ENCODE measurements at regions of chr3 and their contacts with region 1.

Region 1: GRCh38 chr3:4303187-4304123 is at the start of gene SETMAR:
- DNase-seq: peak; percentile 92
- H3K4me3 Mint-ChIP-seq: peak within 1 kb of the TSS; percentile 89
- H3K27ac Mint-ChIP-seq: peak within 1 kb of the TSS; percentile 98
- H3K4me1 Mint-ChIP-seq: peaks cover 27% of the 10 kb centered on the region
- H3K27me3 Mint-ChIP-seq: no peaks in the 10 kb centered on the region
- total RNA-seq, gene SETMAR: 11.6 to 12.6 TPM

Region 2: DNA sequence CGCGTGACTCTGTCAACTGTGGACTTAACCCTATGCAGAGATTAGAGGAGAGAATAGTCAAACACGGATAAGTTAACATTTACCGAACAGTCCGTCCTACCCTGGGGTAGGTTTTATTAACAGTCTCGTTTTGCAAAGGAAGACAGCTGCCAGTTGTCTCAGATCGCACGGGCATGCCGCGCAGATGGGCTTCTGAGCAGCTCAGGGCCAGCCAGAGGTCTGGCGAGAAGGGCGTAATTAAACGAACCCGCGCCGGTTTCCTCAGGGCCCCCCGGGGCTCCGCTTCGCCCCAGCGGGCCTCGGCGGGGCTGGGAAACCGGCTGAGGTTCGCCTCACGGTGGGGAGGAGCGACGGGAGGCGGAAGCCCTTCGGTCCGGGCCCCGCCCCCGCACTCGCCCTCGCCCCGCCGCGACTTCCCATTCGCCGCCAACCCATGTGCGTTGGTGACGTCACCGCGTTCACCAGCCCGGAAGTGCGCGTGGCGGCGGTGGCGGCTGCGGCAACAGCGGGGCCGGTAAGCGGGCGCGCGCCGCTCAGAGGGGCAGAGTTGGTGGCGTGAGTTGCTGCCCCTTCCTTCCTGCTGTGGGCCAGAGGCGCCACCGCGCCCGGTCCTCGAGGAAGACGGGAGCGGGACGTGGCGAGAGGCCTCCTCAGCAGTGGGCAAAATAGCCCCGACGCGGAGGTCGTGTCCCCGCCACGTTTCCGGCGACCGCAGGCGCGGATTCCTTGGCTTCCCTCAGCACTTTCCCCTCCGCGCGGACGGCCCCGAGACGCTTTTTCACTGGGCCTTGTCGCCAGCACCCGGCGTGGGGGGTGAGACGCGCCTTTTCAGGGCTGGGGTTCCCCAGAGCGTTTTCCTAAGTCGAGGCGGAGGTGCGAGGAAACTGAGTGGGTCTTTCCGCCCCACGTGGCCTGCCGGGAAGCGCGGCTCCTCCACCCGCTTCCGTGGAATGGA is 1176.7 kb before region 1 on chr3 and contains the start of gene TRNT1:
- CTCF ChIA-PET with region 1: no interaction called
- intact Hi-C with region 1: loop called (anchors 1 kb)
- DNase-seq: peak; percentile 96
- H3K4me3 Mint-ChIP-seq: peak within 1 kb of the TSS; percentile 97
- H3K27ac Mint-ChIP-seq: peak within 1 kb of the TSS; percentile 98
- H3K4me1 Mint-ChIP-seq: peaks cover 36% of the 10 kb centered on the region
- H3K27me3 Mint-ChIP-seq: no peaks in the 10 kb centered on the region
- total RNA-seq, gene TRNT1: 42.3 to 49.4 TPM

Region 3: GRCh38 chr3:4466741-4467521 is 163.5 kb after region 1 on chr3 and contains the start of gene SUMF1:
- CTCF ChIA-PET with region 1: no interaction called
- intact Hi-C with region 1: loop called (anchors 1 kb)
- DNase-seq: peak; percentile 80
- H3K4me3 Mint-ChIP-seq: peak within 1 kb of the TSS; percentile 82
- H3K27ac Mint-ChIP-seq: peak within 1 kb of the TSS; percentile 78
- H3K4me1 Mint-ChIP-seq: peaks cover 18% of the 10 kb centered on the region
- H3K27me3 Mint-ChIP-seq: no peaks in the 10 kb centered on the region
- total RNA-seq, gene SUMF1: 3.9 to 5.0 TPM

Region 4: GRCh38 chr3:4633078-4634004 is 329.9 kb after region 1 on chr3:
- CTCF ChIA-PET with region 1: interaction called, 6 read pairs
- intact Hi-C with region 1: loop called (anchors 1 kb)
- DNase-seq: no peak
- H3K4me3 Mint-ChIP-seq: no peak overlapping the region
- H3K27ac Mint-ChIP-seq: no peak overlapping the region
- H3K4me1 Mint-ChIP-seq: peaks cover 3% of the 10 kb centered on the region
- H3K27me3 Mint-ChIP-seq: no peaks in the 10 kb centered on the region

Region 5: GRCh38 chr3:5051772-5052171 is 748.3 kb after region 1 on chr3:
- CTCF ChIA-PET with region 1: no interaction called
- intact Hi-C with region 1: no loop called
- DNase-seq: peak; percentile 18
- H3K4me3 Mint-ChIP-seq: no peak overlapping the region
- H3K27ac Mint-ChIP-seq: no peak overlapping the region
- H3K4me1 Mint-ChIP-seq: peaks cover 9% of the 10 kb centered on the region
- H3K27me3 Mint-ChIP-seq: no peaks in the 10 kb centered on the region

Region 6: DNA sequence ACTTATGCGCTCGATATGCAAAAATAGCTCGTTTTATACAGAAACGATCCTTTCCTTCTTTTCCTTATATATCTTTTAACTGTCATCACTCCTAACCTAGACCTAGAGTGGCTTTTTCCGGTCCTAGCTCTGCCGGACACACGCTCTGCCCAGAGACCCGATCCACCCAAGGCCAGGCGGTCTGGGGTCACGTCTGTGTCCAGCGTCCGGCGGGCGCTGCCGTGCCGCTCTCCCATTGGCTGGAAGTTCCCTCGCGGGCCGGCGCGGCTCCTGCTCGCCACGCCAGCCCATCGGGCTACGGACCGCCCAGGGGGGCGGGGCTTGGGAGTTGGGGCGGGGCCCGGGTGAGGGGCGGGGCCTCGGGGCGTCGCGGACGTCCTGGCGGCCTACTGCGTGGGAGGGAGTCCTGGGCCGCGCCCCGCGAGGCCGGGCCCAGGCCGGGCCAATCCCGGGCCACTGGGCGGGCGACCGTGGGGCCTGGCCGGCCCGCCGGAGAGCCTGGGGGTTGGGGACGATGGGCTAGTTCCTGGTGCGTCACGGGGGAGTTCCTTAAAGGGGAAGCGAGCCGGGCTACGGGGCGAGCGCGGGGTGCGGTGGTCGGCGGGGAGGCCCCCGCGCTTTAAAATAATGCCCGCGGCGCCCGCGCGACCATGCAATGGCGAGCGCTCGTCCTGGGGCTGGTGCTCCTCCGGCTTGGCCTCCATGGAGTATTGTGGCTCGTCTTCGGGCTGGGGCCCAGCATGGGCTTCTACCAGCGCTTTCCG is 883.9 kb after region 1 on chr3 and contains the start of gene EDEM1:
- CTCF ChIA-PET with region 1: no interaction called
- intact Hi-C with region 1: loop called (anchors 5 kb)
- DNase-seq: peak; percentile 95
- H3K4me3 Mint-ChIP-seq: peak within 1 kb of the TSS; percentile 96
- H3K27ac Mint-ChIP-seq: peak within 1 kb of the TSS; percentile 99
- H3K4me1 Mint-ChIP-seq: peaks cover 27% of the 10 kb centered on the region
- H3K27me3 Mint-ChIP-seq: no peaks in the 10 kb centered on the region
- total RNA-seq, gene EDEM1: 137 to 138 TPM

Measured in activated naive CD4-positive, alpha-beta T cell treated with anti-CD3 and anti-CD28 coated beads for 36 hours (primary cell).